ENCODE measurements at regions of chr5 and their contacts with region 1.

Region 1: GRCh38 chr5:157575381-157576020 is at the start of gene ADAM19:
- DNase-seq: peak; percentile 27
- H3K4me3 Mint-ChIP-seq: peak within 1 kb of the TSS; percentile 73
- H3K27ac Mint-ChIP-seq: no peak within 1 kb of the TSS
- H3K4me1 Mint-ChIP-seq: peaks cover 13% of the 10 kb centered on the region
- H3K27me3 Mint-ChIP-seq: no peaks in the 10 kb centered on the region
- CTCF ChIP-seq: no peak
- total RNA-seq, gene ADAM19: 0.47 and 0.96 TPM in 2 replicates

Region 2: DNA sequence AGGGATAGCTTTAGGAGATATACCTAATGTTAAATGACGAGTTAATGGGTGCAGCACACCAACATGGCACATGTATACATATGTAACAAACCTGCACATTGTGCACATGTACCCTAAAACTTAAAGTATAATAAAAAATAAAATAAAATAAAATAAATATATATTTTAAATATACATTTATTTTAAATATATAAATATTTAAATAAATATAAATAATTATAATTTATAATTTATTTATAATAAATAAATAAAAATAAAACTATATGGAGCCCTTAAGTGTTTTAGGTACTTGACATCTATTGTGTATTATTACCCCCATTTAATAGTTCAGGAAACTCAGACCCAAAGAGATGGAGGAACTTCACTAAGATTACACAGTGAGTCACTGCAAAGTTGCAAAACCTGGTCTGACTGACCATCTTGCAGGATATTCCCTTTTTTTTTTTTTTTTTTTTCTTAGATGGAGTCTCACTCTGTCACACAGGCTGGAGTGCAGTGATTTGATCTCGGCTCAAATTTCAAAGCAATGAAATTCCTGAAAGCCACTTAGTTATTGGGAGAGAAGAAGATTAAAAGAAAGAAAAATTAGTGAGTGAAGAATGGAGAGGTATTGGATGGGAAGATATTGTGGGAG is 90.1 kb after region 1 on chr5:
- CTCF ChIA-PET with region 1: no interaction called
- POLR2A ChIA-PET with region 1: no interaction called
- intact Hi-C with region 1: loop called (anchors 10 kb)
- DNase-seq: peak; percentile 89
- H3K4me3 Mint-ChIP-seq: no peak overlapping the region
- H3K27ac Mint-ChIP-seq: no peak overlapping the region
- H3K4me1 Mint-ChIP-seq: peaks cover 10% of the 10 kb centered on the region
- H3K27me3 Mint-ChIP-seq: peaks cover 10% of the 10 kb centered on the region
- CTCF ChIP-seq: no peak

Region 3: DNA sequence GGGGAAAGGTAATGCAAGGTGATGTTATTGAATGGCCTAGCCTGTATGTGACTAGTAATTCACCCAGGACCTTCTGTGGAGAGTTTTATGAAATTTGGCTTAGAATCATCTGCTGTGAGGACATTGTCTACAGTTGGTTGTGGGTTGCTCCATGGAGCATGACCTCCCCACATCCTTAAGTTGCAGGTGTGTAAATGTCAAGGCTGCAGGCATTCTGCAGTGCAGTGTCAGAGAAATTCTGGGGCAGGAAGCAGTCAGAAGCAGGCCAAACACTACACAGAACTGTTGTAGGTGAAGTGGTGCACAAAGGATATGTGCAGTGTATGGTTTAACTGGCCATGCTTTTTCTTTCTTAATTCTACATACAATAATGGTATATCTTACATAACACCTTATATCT is 936.0 kb after region 1 on chr5:
- CTCF ChIA-PET with region 1: no interaction called
- POLR2A ChIA-PET with region 1: no interaction called
- intact Hi-C with region 1: no loop called
- DNase-seq: no peak
- H3K4me3 Mint-ChIP-seq: no peak overlapping the region
- H3K27ac Mint-ChIP-seq: no peak overlapping the region
- H3K4me1 Mint-ChIP-seq: peaks cover 15% of the 10 kb centered on the region
- H3K27me3 Mint-ChIP-seq: no peaks in the 10 kb centered on the region
- CTCF ChIP-seq: no peak

Measured in MCF 10A (cell line).